Head of caudate nucleus (tissue), 42 donors: ENCODE measurements at regions of chr12 and their contacts with region 1.

Region 1: GRCh38 chr12:24989216-24989615 is 40.3 kb upstream of the BCAT1 start:
- DNase-seq: no peak

Region 2: DNA sequence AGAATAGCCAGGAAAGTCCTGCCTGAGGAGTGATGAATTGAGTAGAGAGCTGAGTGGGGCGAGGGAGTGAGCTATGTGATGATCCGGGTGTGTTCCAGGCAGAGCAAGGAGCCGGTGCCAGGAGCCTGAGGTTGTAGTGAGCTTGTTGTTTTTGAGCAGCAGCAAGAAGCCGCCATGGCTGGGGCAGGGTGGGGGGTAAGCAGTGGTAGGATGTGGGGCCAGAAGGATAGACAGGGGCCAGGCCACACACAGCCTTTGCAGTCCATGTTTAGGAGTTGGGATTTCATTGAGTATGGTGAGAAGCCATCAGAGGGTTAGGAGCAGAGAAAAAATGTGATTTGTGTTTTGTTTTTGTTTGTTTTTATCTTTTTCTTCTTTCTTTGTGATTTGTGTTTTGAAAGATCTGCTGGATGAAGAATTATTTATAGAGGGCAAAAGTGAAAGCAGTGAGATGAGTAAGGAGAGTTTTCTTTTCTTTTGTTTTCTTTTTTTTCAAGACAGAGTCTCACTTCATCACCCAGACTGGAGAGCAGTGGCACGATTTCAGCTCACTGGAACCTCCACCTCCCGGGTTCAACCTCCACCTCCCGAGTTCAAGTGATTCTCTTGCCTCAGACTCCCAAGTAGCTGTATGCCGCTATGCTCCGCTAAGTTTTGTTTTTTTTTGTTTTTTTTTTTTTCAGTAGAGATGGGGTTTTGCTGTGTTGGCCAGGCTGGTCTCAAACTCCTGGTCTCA is 52.0 kb after region 1 on chr12:
- intact Hi-C with region 1: no loop called
- DNase-seq: no peak

Region 3: DNA sequence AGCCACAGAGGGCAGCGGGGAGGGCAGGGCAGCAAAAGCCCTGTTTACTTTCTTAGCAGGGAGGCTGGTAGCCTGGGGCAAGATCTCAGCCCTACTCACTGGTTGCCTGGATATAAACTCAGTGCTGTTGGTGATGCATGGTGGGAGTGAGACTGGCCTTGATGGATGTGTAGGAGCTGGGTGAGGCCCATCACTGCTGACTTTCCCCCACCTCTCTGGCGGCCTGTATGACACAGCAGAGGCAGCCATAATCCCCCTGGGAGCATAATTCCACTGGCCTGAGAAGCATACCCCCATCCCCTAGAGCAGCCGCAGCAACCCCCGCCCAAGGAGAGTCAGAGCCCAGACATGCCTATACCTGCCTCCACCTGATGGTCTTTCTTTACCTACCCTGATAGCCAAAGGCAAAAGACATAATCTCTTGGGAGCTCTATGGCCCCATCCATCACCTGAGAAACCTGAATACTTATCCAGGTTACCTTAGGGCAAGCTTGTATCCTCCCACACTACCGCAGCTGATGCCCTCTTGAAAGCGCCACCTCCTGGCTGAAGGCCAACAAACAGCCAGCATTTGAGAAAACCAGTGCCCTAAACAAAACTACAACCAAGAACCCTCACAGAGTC is 146.4 kb after region 1 on chr12:
- intact Hi-C with region 1: loop called (anchors 5 kb)
- DNase-seq: no peak